CD8-positive, alpha-beta T cell (primary cell): ENCODE measurements at regions of chr1 and their contacts with region 1.

Region 1: GRCh38 chr1:32107742-32108661 is at the start of gene KPNA6:
- DNase-seq: peak; percentile 83 to 98 (median 90)
- ATAC-seq: peak; percentile 89
- H3K4me3 ChIP-seq: peak within 1 kb of the TSS; percentile 87 to 95
- H3K4me3 Mint-ChIP-seq: peak within 1 kb of the TSS; percentile 98
- H3K27ac ChIP-seq: peak within 1 kb of the TSS; percentile 84 to 93
- H3K27ac Mint-ChIP-seq: peak within 1 kb of the TSS; percentile 98
- H3K4me1 ChIP-seq: peaks cover 45% of the 10 kb centered on the region
- H3K4me1 Mint-ChIP-seq: peaks cover 50% of the 10 kb centered on the region
- H3K27me3 ChIP-seq: no peaks in the 10 kb centered on the region
- H3K27me3 Mint-ChIP-seq: no peaks in the 10 kb centered on the region
- CTCF ChIP-seq: no peak
- total RNA-seq, gene KPNA6: 51.7 to 58.7 TPM

Region 2: GRCh38 chr1:32122151-32122550 is 14.1 kb after region 1 on chr1:
- CTCF ChIA-PET with region 1: interaction called, 21 read pairs
- POLR2A ChIA-PET with region 1: interaction called, 18 read pairs
- intact Hi-C with region 1: no loop called
- DNase-seq: peak in 2 of 9 experiments; percentile 25 to 27
- ATAC-seq: no peak
- H3K4me3 ChIP-seq: no peak overlapping the region
- H3K4me3 Mint-ChIP-seq: peak overlapping the region; percentile 60
- H3K27ac ChIP-seq: no peak overlapping the region
- H3K27ac Mint-ChIP-seq: peak overlapping the region; percentile 79
- H3K4me1 ChIP-seq: peaks cover 37% of the 10 kb centered on the region
- H3K4me1 Mint-ChIP-seq: peaks cover 56% of the 10 kb centered on the region
- H3K27me3 ChIP-seq: no peaks in the 10 kb centered on the region
- H3K27me3 Mint-ChIP-seq: no peaks in the 10 kb centered on the region
- CTCF ChIP-seq: no peak

Region 3: GRCh38 chr1:32786856-32787255 is 678.9 kb after region 1 on chr1:
- CTCF ChIA-PET with region 1: no interaction called
- POLR2A ChIA-PET with region 1: no interaction called
- intact Hi-C with region 1: no loop called
- DNase-seq: peak in 1 of 9 experiments; percentile 30
- ATAC-seq: no peak
- H3K4me3 ChIP-seq: no peak overlapping the region
- H3K4me3 Mint-ChIP-seq: no peak overlapping the region
- H3K27ac ChIP-seq: no peak overlapping the region
- H3K27ac Mint-ChIP-seq: no peak overlapping the region
- H3K4me1 ChIP-seq: no peaks in the 10 kb centered on the region
- H3K4me1 Mint-ChIP-seq: peaks cover 2% of the 10 kb centered on the region
- H3K27me3 ChIP-seq: no peaks in the 10 kb centered on the region
- H3K27me3 Mint-ChIP-seq: no peaks in the 10 kb centered on the region
- CTCF ChIP-seq: no peak